GM13977 (cell line): ENCODE measurements at regions of chr7 and their contacts with region 1.

Region 1: GRCh38 chr7:30800785-30801252 is 29.6 kb downstream of the MINDY4 start:
- DNase-seq: peak; percentile 80
- CTCF ChIP-seq: peak; percentile 76

Region 2: GRCh38 chr7:30938435-30939316 is 137.9 kb after region 1 on chr7:
- in situ Hi-C with region 1: no loop called
- DNase-seq: peak; percentile 80
- CTCF ChIP-seq: peak; percentile 99

Region 3: DNA sequence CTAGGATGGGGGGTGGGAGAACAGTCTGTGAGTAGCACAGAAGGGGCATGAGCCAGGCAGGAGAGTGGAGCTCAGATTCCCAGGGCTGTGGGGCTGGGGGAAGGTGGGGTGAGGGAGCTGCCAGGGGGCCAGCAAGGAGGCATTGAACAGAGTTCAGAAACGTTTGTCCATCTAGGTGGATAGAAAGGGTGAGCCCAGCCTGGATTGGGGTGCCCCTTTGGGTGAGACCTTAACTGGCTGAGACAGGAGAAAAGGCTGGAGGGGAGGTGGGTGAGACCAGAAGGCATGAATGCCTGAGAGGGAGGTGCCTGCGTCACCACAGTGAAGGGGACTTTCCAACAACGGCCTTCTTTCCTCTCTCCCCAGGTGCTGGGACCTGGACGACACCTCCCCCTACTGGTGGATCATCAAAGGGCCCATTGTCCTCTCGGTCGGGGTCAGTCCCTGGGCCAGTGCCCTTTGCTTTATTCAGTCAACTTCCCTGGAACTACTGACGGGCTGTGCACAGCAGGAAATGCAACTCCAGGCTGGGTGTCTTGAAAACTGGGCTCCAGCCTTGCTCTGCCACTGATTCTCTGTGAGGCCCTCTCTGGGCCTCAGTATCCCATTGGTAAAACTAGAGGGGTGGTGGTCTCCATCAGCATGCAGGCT is 173.9 kb after region 1 on chr7:
- in situ Hi-C with region 1: loop called (anchors 10 kb)
- DNase-seq: peak; percentile 86
- CTCF ChIP-seq: peak; percentile 80

Region 4: DNA sequence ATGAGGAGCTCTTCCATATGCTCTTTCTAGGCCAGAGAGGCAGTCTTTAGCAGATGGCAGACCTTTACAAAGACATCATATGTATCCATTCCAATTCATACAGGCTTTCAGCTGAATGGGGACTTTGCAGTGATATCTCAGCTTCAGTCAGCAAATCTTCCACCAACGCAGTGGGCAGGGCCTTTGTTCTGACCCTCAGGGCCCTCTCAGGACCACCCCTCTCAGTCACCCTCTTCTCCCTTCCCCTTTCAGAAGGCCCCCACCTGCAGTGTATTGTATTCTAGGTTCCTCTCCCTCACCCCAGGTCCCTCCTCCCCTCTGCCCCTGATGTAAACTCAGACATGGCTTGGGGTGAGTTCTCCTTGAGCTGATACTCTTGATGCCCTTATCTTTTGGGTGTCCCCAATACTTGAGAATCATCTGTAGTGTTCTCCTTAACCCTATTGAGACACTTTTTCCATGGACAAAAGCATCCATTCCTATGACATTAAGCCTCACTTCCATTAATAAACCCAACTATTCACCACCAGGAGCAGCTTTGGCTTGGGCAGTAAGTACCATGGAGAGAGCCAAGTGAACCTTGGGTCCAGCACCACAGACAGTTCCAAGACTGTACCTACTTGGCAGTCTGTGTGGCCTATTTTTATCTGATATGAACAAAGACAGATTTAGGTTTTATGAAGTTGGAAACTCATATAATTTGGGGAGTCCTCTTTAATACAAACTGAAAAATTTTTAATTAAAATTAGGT is 313.9 kb after region 1 on chr7:
- in situ Hi-C with region 1: loop called (anchors 10 kb)
- DNase-seq: no peak
- CTCF ChIP-seq: no peak